Calu3 (cell line): ENCODE measurements at regions of chr18 and their contacts with region 1.

Region 1: GRCh38 chr18:10015941-10016819 is 102.4 kb downstream of the VAPA start:
- DNase-seq: peak; percentile 27
- H3K4me3 Mint-ChIP-seq: peak overlapping the region; percentile 41
- H3K27ac Mint-ChIP-seq: peak overlapping the region; percentile 82
- H3K4me1 Mint-ChIP-seq: peaks cover 52% of the 10 kb centered on the region
- H3K27me3 Mint-ChIP-seq: no peaks in the 10 kb centered on the region
- CTCF ChIP-seq: no peak

Region 2: DNA sequence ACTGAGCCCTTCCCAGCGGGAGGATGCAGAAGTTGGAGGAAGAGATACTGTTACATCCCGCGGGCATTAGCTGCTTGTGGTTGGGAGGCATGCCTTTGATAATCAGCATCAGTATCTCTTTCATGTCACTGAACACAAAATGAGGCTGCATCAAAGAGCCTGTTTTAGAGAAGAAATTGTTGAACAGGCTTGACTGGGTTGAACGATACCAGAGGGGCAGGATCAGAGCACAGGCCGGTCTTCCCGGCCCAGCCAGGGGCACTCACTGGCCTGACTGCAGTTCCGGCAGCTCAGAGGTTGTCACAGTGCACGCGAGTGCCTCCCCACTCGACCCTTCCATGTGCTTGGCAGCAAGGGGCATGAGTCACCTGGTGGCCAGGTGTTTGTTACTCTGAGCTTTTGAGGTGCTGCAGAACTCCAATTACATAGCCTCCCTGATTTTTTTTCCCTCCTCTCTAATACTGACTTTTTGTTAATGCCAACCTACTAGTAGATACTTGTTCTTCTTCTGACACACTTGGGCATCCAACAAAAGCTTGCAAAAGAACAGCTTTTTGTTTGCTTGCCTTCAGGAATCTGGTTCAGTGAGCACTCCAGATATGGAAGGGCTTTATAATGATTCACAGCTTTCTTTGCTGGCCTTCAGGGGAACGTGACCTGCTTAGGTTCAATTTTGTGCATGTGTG is 19.3 kb after region 1 on chr18:
- CTCF ChIA-PET with region 1: interaction called, 7 read pairs
- intact Hi-C with region 1: loop called (anchors 2 kb)
- DNase-seq: peak; percentile 64
- H3K4me3 Mint-ChIP-seq: no peak overlapping the region
- H3K27ac Mint-ChIP-seq: no peak overlapping the region
- H3K4me1 Mint-ChIP-seq: peaks cover 18% of the 10 kb centered on the region
- H3K27me3 Mint-ChIP-seq: no peaks in the 10 kb centered on the region
- CTCF ChIP-seq: no peak

Region 3: GRCh38 chr18:10057894-10058791 is 42.0 kb after region 1 on chr18:
- CTCF ChIA-PET with region 1: interaction called, 3 read pairs
- intact Hi-C with region 1: loop called (anchors 5 kb)
- DNase-seq: no peak
- H3K4me3 Mint-ChIP-seq: no peak overlapping the region
- H3K27ac Mint-ChIP-seq: no peak overlapping the region
- H3K4me1 Mint-ChIP-seq: peaks cover 10% of the 10 kb centered on the region
- H3K27me3 Mint-ChIP-seq: peaks cover 31% of the 10 kb centered on the region
- CTCF ChIP-seq: no peak

Region 4: DNA sequence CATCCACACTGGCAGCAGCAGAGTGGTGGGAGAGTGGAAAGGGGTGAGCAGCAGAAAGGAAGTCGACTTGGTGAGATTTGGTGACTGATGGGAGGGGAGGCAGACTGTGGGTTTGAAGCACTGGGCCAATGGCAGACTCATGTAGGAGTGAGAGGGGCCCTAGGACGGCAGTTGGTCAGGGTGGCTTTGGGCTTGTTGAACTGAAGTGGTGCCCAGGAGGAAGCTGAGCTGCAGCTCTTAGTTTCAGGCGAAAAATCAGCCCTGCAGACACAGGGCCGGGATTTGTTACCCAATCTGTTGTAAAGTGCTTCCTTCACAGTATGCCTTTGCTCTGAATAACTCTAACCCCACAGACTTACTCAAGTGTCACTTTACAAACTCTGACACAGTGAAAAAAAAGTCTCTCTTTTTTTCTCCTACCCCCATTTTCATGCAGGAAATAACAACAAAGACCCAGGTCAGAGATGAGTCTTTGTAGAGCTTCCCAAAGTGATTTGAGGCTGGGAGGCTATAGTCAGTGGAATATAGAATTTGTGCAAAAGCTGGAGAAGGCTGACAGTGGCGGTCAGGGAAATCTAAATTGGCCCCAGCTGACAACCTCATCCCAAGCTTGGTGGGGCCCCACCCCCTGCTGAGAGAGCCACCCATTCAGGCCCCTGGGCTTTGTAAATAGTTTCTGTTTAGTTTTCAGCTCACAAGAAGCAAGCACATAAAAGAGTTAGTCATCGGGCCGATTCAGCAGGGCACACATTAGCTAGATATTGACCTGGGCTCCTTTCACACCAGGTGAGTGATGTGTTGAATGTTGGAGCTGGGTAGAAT is 124.5 kb after region 1 on chr18:
- CTCF ChIA-PET with region 1: interaction called, 5 read pairs
- intact Hi-C with region 1: loop called (anchors 5 kb)
- DNase-seq: peak; percentile 54
- H3K4me3 Mint-ChIP-seq: no peak overlapping the region
- H3K27ac Mint-ChIP-seq: peak overlapping the region; percentile 10
- H3K4me1 Mint-ChIP-seq: peaks cover 37% of the 10 kb centered on the region
- H3K27me3 Mint-ChIP-seq: no peaks in the 10 kb centered on the region
- CTCF ChIP-seq: no peak

Region 5: DNA sequence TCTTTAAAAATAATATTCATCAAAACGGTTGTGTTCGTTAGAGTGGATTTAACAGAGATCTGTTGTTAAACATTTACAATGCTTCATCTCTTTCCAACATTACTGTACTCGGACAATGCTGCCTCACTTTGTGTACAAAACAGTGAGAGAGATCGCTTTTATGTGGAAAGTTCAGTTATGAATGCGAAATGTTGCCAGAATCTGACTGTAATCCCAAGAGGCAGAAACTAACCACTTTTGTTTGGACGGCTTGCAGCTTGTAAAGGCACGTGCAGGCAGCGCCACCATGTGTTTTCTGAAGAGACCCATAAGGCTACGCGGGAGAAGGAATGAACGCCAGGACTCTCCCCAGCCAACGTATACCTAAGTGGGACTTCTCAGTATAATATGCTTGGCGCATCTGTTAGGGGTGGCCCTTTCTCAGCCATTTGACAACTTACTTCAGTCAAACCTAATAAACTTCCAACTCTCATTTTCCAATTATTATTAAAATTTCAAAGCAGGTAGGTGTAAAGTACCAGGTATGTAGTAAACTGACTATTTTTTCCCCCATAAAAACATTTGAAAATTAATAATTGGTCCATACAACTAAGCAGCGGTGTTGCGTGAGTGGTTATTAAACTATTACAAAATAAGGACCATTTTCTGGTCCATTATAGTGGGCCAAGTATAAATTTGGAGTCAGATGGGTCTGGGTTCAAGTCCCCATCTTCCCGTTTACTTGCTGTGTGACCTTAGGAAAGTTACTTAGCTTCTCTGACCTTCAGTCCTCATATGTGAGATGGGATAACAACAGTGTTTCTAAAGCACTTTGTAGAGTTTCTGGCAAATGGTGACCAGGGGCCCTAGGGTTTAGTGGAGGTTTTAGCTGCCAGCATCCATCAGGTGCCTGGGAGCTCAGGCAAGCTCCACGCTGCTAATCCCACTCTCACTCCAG is 504.1 kb after region 1 on chr18:
- CTCF ChIA-PET with region 1: interaction called, 4 read pairs
- intact Hi-C with region 1: loop called (anchors 5 kb)
- DNase-seq: peak; percentile 74
- H3K4me3 Mint-ChIP-seq: no peak overlapping the region
- H3K27ac Mint-ChIP-seq: no peak overlapping the region
- H3K4me1 Mint-ChIP-seq: peaks cover 12% of the 10 kb centered on the region
- H3K27me3 Mint-ChIP-seq: peaks cover 71% of the 10 kb centered on the region
- CTCF ChIP-seq: peak; percentile 63